ENCODE measurements at regions of chr7 and their contacts with region 1.

Region 1: DNA sequence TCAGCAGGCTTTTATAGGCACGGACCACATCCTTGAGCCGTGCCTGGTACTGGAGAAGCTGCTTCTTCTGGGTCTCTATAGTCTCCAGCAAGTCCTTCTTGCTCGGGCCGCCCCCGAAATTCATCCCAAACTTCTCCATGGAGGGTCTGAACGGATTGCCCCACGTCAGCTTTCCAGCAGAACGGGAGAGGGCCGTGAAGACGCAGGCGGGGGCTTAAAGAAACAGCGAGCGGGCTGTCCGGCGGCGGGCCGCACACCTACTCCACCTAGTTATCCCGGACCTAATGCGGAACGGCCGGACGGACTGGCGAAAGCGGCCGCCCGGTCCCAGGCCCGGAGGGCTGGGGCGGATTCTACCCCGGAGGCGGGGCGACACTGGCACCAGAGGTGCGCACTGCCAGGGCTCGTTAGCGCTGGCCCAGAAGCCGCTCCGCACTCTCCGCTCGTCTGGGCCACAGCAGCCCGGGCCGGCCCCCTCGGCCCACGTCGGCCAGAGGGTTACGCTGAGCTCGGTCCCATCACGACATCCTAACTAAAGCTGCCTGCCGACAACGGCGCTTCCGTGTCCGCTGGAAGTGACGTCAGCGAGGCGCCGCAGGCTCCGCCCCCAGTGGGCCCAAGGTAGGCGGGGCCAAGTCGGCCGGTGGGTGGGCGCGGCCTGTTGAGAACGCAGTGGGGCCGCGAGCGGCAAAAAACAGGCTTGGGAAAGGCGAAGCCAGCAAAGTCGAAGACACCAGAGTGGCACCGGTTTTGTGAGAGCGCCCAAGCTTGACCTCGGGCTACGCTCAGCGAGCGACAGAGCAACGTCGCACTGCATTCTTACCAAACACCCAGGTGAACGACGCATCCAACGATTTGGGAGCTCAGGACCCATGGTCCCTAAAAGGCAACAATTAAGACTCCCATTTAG is at the start of gene GCC1:
- DNase-seq: peak; percentile 95
- H3K4me3 Mint-ChIP-seq: peak within 1 kb of the TSS; percentile 95
- H3K27ac Mint-ChIP-seq: peak within 1 kb of the TSS; percentile 92
- H3K4me1 Mint-ChIP-seq: peaks cover 33% of the 10 kb centered on the region
- H3K27me3 Mint-ChIP-seq: no peaks in the 10 kb centered on the region
- CTCF ChIP-seq: no peak
- total RNA-seq, gene GCC1: 22.0 and 22.5 TPM in 2 replicates

Region 2: GRCh38 chr7:127330070-127330469 is 255.2 kb before region 1 on chr7:
- CTCF ChIA-PET with region 1: no interaction called
- intact Hi-C with region 1: no loop called
- DNase-seq: no peak
- H3K4me3 Mint-ChIP-seq: no peak overlapping the region
- H3K27ac Mint-ChIP-seq: no peak overlapping the region
- H3K4me1 Mint-ChIP-seq: no peaks in the 10 kb centered on the region
- H3K27me3 Mint-ChIP-seq: peaks cover 45% of the 10 kb centered on the region
- CTCF ChIP-seq: no peak

Region 3: GRCh38 chr7:127383123-127383835 is 202.0 kb before region 1 on chr7:
- CTCF ChIA-PET with region 1: no interaction called
- intact Hi-C with region 1: no loop called
- DNase-seq: no peak
- H3K4me3 Mint-ChIP-seq: no peak overlapping the region
- H3K27ac Mint-ChIP-seq: peak overlapping the region; percentile 60
- H3K4me1 Mint-ChIP-seq: peaks cover 27% of the 10 kb centered on the region
- H3K27me3 Mint-ChIP-seq: no peaks in the 10 kb centered on the region
- CTCF ChIP-seq: no peak

Region 4: DNA sequence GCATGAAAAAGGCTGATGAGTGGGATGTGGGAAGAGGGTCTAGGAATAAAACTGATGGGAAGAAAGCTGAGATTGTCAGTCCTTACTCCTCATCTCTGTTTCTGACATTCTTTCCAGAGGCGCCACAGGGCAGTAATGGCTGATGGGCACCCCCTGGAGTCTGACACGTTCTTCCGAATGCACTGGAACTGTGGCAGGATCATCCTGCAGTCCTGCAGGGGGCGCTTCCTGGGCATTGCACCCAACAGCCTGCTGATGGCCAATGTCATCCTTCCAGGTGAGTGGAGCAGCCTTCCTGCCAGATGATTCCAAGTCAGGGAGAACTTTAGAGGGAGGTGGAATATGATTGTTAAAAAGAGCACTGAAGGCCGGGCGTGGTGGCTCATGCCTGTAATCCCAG is 13.0 kb after region 1 on chr7:
- CTCF ChIA-PET with region 1: no interaction called
- intact Hi-C with region 1: no loop called
- DNase-seq: peak; percentile 19
- H3K4me3 Mint-ChIP-seq: no peak overlapping the region
- H3K27ac Mint-ChIP-seq: no peak overlapping the region
- H3K4me1 Mint-ChIP-seq: peaks cover 6% of the 10 kb centered on the region
- H3K27me3 Mint-ChIP-seq: peaks cover 20% of the 10 kb centered on the region
- CTCF ChIP-seq: no peak

Region 5: DNA sequence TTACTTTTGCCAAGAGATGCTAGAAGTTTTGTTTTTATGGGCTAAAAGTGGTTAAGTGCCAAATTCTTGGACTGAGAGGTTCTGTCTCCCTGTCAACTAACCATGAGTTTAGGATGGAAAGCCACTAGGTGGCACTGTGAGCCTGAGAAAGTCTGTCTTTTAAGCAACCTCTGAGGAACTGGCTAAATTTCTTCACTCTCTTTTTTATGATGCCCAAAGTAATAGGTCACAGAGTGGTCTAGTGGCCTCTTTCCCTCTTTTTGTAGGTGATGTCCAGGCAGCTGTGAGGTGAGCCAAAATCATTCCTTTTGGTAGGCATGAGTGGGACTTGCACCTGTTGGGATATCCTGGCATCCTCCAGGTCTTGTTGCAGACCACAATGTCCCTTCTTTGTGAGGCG is 123.5 kb after region 1 on chr7:
- CTCF ChIA-PET with region 1: interaction called, 3 read pairs
- intact Hi-C with region 1: loop called (anchors 5 kb)
- DNase-seq: peak; percentile 73
- H3K4me3 Mint-ChIP-seq: no peak overlapping the region
- H3K27ac Mint-ChIP-seq: no peak overlapping the region
- H3K4me1 Mint-ChIP-seq: peaks cover 20% of the 10 kb centered on the region
- H3K27me3 Mint-ChIP-seq: no peaks in the 10 kb centered on the region
- CTCF ChIP-seq: peak; percentile 76

Region 6: GRCh38 chr7:128164061-128164954 is 579.0 kb after region 1 on chr7:
- CTCF ChIA-PET with region 1: no interaction called
- intact Hi-C with region 1: loop called (anchors 5 kb)
- DNase-seq: peak; percentile 77
- H3K4me3 Mint-ChIP-seq: no peak overlapping the region
- H3K27ac Mint-ChIP-seq: peak overlapping the region; percentile 39
- H3K4me1 Mint-ChIP-seq: peaks cover 29% of the 10 kb centered on the region
- H3K27me3 Mint-ChIP-seq: peaks cover 63% of the 10 kb centered on the region
- CTCF ChIP-seq: no peak

Measured in Calu3 (cell line).